Activated T-helper 2 cell treated with anti-CD3 and anti-CD28 coated beads, Interferon-gamma antibody, Interleukin-2, Interleukin-4, amounts not matched to agents 10 μg/mL and 5 μg/mL and 100 μg/mL, durations not matched to agents 14 hours and 24 hours and 36 hours (primary cell): ENCODE measurements at regions of chr9 and their contacts with region 1.

Region 1: DNA sequence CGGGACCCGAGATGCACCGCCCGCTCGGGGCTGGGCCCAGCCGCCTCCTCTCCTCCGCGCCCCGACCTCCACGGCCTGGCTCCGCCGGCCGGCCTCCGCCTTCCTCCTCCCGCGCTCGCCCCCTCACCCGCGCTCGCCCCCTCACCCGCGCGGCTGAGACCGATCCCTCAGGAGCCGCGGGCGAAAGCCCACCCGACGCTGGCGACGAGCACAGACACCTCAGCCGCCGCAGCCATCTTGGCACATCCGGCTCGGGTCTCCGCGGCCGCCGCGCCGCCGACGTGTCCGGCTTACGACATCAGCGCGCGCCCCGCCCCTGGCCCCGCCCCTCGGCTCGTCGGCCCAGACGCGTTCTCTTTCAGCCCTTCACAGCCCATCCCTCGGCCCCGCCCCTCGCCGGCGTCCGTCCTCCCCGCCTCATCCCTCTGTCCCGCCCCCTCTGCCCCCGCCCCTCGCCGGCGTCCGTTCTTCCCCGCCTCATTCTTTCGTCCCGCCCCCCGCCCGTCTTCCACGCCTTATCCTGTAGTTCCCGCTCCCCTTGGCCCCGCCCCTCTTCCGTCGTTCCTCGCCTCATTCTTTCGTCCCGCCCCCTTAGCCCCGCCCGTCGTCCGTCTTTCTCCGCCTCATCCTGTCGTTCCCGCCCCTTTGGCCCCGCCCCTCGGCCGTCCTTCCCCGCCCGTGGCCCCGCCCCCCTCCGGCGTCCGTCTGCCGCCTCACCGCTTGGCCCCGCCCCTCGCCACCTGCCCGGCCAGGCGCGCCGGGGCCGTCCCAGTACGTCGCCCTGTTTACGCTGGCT is at the start of gene SEC16A:
- DNase-seq: peak; percentile 98
- H3K4me3 Mint-ChIP-seq: peak within 1 kb of the TSS; percentile 98
- H3K27ac Mint-ChIP-seq: peak within 1 kb of the TSS; percentile 98
- H3K4me1 Mint-ChIP-seq: peaks cover 18% of the 10 kb centered on the region
- H3K27me3 Mint-ChIP-seq: no peaks in the 10 kb centered on the region
- total RNA-seq, gene SEC16A: 74.5 and 77.5 TPM in 2 replicates

Region 2: DNA sequence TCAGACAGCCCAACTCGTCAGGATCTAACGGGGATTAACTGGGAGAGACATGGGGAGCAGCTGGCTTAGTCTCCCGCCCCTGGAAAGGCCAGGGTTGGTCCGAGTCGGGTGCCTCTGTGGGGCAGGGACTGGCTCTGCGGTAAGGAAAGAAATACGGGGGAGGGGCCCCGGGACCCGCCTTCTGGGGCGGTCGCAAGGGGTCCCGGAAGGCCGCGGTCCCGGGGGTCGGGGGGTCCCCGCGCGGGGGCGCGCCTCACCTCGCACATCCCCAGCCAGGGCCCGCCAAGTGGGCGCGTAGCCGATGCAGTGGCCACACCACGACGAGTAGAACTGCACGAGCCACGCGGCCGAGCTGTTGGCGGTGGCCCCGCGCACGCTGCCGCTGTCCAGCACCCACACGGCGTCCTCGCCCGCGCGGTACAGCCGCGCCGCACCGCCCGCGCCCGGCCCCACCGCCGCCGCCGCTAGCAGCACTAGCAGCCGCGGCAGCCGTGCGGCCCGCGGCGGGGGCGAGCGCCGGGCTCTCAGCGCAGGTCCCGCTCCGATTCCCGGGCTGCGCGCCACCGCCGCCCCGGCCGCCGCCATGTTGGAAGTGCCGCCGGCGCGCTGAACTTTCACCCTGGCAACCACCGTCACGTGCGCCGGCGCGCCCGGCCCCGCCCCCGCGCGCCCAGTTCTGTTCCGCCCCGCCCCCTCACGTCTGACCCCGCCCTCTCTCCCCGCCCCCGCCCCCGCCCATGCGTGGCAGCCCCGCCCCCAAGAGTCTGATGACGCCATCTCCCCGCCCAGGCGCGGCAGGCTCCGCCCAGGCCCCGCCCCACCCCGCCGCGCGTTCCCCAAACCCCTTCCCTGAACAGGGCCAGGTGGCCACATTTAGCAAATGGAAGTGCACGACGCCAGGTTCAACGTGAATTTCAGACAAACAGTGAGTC is 237.5 kb before region 1 on chr9 and contains the start of gene QSOX2:
- intact Hi-C with region 1: loop called (anchors 10 kb)
- DNase-seq: peak; percentile 81
- H3K4me3 Mint-ChIP-seq: peak within 1 kb of the TSS; percentile 92
- H3K27ac Mint-ChIP-seq: peak within 1 kb of the TSS; percentile 90
- H3K4me1 Mint-ChIP-seq: peaks cover 26% of the 10 kb centered on the region
- H3K27me3 Mint-ChIP-seq: peaks cover 4% of the 10 kb centered on the region
- total RNA-seq, gene QSOX2: 24.9 and 25.4 TPM in 2 replicates

Region 3: GRCh38 chr9:136410500-136411287 is 72.3 kb before region 1 on chr9 and contains the starts of genes ENTR1 and PMPCA:
- intact Hi-C with region 1: loop called (anchors 2 kb)
- DNase-seq: peak; percentile 93
- H3K4me3 Mint-ChIP-seq: peak within 1 kb of the TSS; percentile 95
- H3K27ac Mint-ChIP-seq: peak within 1 kb of the TSS; percentile 95
- H3K4me1 Mint-ChIP-seq: peaks cover 35% of the 10 kb centered on the region
- H3K27me3 Mint-ChIP-seq: no peaks in the 10 kb centered on the region
- total RNA-seq, gene ENTR1: 66.4 and 75.6 TPM in 2 replicates
- total RNA-seq, gene PMPCA: 111 TPM in 2 replicates

Region 4: GRCh38 chr9:136439550-136440408 is 43.2 kb before region 1 on chr9 and contains the start of gene INPP5E:
- intact Hi-C with region 1: loop called (anchors 5 kb)
- DNase-seq: peak; percentile 84
- H3K4me3 Mint-ChIP-seq: peak within 1 kb of the TSS; percentile 83
- H3K27ac Mint-ChIP-seq: no peak within 1 kb of the TSS
- H3K4me1 Mint-ChIP-seq: peaks cover 19% of the 10 kb centered on the region
- H3K27me3 Mint-ChIP-seq: no peaks in the 10 kb centered on the region
- total RNA-seq, gene INPP5E: 20.8 and 21.8 TPM in 2 replicates

Region 5: GRCh38 chr9:136512651-136513071 is 29.7 kb after region 1 on chr9:
- intact Hi-C with region 1: no loop called
- DNase-seq: no peak
- H3K4me3 Mint-ChIP-seq: no peak overlapping the region
- H3K27ac Mint-ChIP-seq: no peak overlapping the region
- H3K4me1 Mint-ChIP-seq: no peaks in the 10 kb centered on the region
- H3K27me3 Mint-ChIP-seq: no peaks in the 10 kb centered on the region

Region 6: DNA sequence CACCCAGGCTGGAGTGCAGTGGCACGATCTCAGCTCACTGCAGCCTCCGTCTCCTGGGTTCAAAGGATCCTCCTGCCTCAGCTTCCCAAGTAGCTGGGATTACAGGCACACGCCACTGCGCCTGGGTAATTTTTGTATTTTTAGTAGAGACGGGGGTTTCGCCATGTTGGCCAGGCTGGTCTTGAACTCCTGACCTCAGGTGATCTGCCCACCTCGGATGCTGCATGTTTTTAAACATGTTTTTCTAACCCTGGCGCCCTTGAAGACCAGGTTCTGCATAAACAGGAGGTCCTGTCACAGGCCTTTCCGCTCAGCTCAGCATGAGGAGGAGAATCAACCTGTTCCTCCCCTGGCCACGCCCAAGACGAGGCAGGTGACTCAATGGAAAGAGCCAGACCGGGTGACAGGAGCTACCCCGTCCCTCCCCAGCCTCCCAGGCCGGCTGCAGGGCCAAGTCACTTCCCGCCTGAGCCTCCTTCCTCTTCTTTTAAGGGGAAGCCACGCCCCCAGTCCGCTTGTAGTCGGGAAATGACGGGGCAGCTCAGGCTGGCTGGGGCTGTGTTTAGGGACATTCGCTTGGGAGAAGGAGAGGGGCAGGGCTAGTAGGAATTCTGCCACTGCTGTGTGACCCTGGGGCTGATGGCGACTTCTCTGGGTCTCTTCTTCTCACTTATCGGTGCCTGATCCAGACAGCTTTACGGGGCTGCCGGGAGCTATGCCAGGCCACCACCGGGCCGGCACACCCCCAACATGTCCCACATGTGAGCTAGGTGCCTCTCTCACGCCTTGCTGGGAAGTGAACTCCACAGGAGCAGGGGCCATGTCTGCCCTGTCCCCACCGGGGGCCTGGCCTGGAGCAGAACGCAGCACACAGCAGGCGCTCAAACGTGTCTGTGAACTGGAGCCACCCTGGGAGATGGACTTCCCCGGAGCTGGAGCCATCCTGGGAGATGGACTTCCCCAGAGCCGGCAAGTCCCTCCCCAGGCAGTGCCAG is 56.7 kb after region 1 on chr9:
- intact Hi-C with region 1: loop called (anchors 2 kb)
- DNase-seq: peak; percentile 92
- H3K4me3 Mint-ChIP-seq: peak overlapping the region; percentile 89
- H3K27ac Mint-ChIP-seq: peak overlapping the region; percentile 100
- H3K4me1 Mint-ChIP-seq: peaks cover 37% of the 10 kb centered on the region
- H3K27me3 Mint-ChIP-seq: no peaks in the 10 kb centered on the region

Region 7: DNA sequence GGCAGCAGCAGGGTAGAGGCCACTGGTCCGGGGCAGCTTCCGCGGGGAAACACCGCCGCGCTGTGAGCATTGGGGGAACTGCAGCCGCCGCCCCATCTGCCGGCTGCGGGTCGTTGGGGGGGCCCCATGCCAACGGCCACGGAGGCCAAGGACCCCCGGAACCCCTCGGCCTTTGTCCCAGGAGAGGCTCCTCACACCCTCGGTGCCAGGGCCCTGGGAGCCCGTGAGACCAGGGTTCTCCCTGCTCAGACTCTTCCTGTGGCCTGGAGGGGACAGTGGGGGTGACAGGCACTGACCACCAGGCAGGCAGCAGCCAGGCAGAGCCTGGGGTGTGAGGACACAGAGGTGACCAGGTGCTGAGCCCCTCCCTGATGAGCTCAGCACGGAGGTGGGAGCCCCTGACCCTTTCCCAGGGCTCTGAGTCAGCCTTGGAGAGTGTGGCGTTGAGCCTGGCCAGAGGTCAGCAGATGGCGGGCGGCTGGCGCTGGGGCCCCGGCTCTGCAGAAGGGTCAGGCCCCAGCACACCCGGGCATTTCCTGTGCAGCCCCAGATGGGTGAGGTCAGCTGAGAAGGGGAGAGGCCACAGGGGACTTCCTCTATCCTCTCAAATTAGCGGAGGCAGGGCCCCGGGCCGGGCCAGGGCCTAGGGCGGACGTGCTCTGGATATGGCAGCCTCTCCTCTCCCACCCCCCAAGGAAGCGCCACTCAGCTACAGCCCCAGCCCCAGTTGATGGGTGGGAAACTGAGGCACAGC is 161.8 kb after region 1 on chr9:
- intact Hi-C with region 1: loop called (anchors 1 kb)
- DNase-seq: peak; percentile 64
- H3K4me3 Mint-ChIP-seq: no peak overlapping the region
- H3K27ac Mint-ChIP-seq: no peak overlapping the region
- H3K4me1 Mint-ChIP-seq: no peaks in the 10 kb centered on the region
- H3K27me3 Mint-ChIP-seq: peaks cover 29% of the 10 kb centered on the region